RWPE1 (cell line): ENCODE measurements at regions of chr1 and their contacts with region 1.

Region 1: GRCh38 chr1:58652651-58653184 is 47.1 kb downstream of the MYSM1 start:
- DNase-seq: peak; percentile 66
- H3K27ac ChIP-seq: no peak overlapping the region
- CTCF ChIP-seq: peak; percentile 85

Region 2: GRCh38 chr1:58515794-58516401 is 136.8 kb before region 1 on chr1:
- CTCF ChIA-PET with region 1: interaction called, 25 read pairs
- POLR2A ChIA-PET with region 1: no interaction called
- DNase-seq: peak; percentile 54
- H3K27ac ChIP-seq: no peak overlapping the region
- CTCF ChIP-seq: peak; percentile 62

Region 3: DNA sequence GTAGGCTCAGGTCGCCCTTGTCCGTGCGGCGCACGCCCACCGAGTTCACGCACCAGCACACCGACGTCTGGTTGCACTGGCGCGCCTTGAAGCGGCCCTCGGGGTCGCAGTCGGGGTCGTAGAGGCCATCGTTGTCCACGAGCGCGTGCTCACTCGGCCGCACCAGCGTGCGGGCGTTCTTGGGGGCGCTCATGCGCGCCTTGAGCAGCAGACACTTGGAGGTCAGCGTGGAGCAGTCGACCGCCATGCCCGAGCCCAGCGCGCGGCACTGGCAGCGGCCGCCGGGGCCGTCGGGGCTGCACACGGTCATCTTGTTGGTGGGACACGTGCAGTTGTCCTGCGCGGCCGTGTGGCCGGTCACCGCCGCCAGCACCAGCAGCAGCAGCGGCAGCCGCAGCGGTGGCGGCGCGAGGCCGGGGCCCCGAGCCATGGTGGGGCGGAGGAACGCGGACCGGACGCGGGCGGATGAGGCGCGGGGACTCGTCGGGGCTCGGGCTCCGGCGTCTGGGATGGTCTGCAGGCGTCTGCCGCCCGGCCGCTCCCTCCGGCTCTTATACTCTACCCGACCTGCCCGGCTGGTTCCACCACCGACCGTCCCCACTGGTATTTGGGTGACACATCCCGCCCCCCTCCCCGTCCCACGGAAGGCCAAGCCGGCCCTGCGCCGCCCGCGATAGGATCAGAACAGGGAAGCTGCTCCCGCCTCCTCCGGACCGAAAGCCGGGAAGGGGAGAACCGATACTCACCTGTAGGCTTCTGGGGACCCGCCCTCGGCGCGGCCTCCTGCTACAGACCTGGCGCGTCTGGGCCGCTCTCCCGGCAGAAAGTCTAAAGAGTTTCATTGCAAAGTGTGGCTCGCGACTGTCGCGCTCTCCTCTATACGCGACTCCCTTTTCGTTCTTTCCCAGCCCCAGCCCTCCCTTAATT is 75.7 kb before region 1 on chr1 and contains the start of gene TACSTD2:
- CTCF ChIA-PET with region 1: interaction called, 13 read pairs
- POLR2A ChIA-PET with region 1: no interaction called
- DNase-seq: peak; percentile 86
- H3K27ac ChIP-seq: peak within 1 kb of the TSS; percentile 93
- CTCF ChIP-seq: 0 out of 2 replicates have a peak, but pooled peaks have one; percentile 22

Region 4: GRCh38 chr1:58861506-58861905 is 208.8 kb after region 1 on chr1:
- CTCF ChIA-PET with region 1: no interaction called
- POLR2A ChIA-PET with region 1: no interaction called
- DNase-seq: peak; percentile 13
- H3K27ac ChIP-seq: no peak overlapping the region
- CTCF ChIP-seq: no peak